CD8-positive, alpha-beta T cell (primary cell): ENCODE measurements at regions of chr10 and their contacts with region 1.

Region 1: DNA sequence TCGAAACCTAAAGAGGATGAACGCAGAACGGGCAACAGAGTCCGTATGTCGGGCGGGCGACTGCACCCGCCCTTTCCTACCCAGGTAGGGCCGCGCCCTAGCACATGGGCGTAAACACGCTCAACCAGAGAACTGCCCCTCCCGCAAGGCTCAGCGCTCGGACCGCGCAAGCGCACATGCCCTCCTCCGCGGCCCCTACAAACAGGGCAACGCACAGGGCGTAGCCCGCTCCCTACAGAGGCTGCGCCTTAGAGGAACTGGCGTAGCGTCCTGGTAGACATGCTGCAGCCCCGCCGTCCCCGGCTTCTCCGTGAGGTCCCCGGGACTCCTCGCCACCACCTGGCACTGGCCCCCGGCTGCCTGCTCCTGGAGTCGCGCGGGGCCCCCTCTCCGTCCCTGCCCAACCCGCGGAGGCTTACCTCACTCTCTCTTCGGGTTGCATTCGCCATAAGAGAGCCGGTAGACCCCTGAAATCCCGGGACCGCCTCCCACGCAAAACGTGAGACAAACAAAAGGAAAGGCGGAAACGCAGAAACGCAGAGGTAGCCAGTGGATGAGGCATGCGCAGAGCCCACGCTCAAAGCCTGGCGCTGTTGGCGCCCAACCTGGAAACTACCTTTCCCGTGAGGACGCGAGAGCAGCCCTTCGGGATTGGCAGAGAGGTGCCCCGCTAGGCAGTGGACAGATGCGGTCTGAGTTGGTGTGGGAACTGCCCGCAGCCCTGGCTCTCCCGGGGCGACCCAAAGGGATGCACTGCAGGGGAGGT is at the start of gene ZNF33B:
- DNase-seq: peak; percentile 84 to 97 (median 93)
- ATAC-seq: peak; percentile 92
- H3K4me3 ChIP-seq: peak within 1 kb of the TSS; percentile 82 to 88
- H3K4me3 Mint-ChIP-seq: peak within 1 kb of the TSS; percentile 98
- H3K27ac ChIP-seq: peak within 1 kb of the TSS; percentile 91 to 93
- H3K27ac Mint-ChIP-seq: peak within 1 kb of the TSS; percentile 98
- H3K4me1 ChIP-seq: peaks cover 14% of the 10 kb centered on the region
- H3K4me1 Mint-ChIP-seq: peaks cover 44% of the 10 kb centered on the region
- H3K27me3 ChIP-seq: no peaks in the 10 kb centered on the region
- H3K27me3 Mint-ChIP-seq: no peaks in the 10 kb centered on the region
- CTCF ChIP-seq: no peak
- total RNA-seq, gene ZNF33B: 16.4 to 17.0 TPM

Region 2: GRCh38 chr10:42782446-42783180 is 144.4 kb after region 1 on chr10 and contains the start of gene BMS1:
- CTCF ChIA-PET with region 1: no interaction called
- POLR2A ChIA-PET with region 1: interaction called, 10 read pairs
- intact Hi-C with region 1: loop called (anchors 1 kb)
- DNase-seq: peak; percentile 82 to 92 (median 87)
- ATAC-seq: peak; percentile 85
- H3K4me3 ChIP-seq: peak within 1 kb of the TSS; percentile 83 to 88
- H3K4me3 Mint-ChIP-seq: peak within 1 kb of the TSS; percentile 99
- H3K27ac ChIP-seq: peak within 1 kb of the TSS; percentile 78 to 90
- H3K27ac Mint-ChIP-seq: peak within 1 kb of the TSS; percentile 96
- H3K4me1 ChIP-seq: peaks cover 23% of the 10 kb centered on the region
- H3K4me1 Mint-ChIP-seq: peaks cover 42% of the 10 kb centered on the region
- H3K27me3 ChIP-seq: no peaks in the 10 kb centered on the region
- H3K27me3 Mint-ChIP-seq: peaks cover 4% of the 10 kb centered on the region
- CTCF ChIP-seq: no peak
- total RNA-seq, gene BMS1: 18.1 to 19.9 TPM

Region 3: GRCh38 chr10:43105102-43105785 is 467.0 kb after region 1 on chr10:
- CTCF ChIA-PET with region 1: no interaction called
- POLR2A ChIA-PET with region 1: no interaction called
- intact Hi-C with region 1: loop called in 1 of 2 experiments (anchors 10 kb)
- DNase-seq: peak; percentile 54 to 87 (median 71)
- ATAC-seq: peak; percentile 96
- H3K4me3 ChIP-seq: peak overlapping the region; percentile 56 to 72
- H3K4me3 Mint-ChIP-seq: peak overlapping the region; percentile 80
- H3K27ac ChIP-seq: no peak overlapping the region
- H3K27ac Mint-ChIP-seq: no peak overlapping the region
- H3K4me1 ChIP-seq: peaks cover 13% of the 10 kb centered on the region
- H3K4me1 Mint-ChIP-seq: peaks cover 8% of the 10 kb centered on the region
- H3K27me3 ChIP-seq: peaks cover 0 to 10% of the 10 kb centered on the region in 2 experiments
- H3K27me3 Mint-ChIP-seq: peaks cover 17% of the 10 kb centered on the region
- CTCF ChIP-seq: peak; percentile 98

Region 4: DNA sequence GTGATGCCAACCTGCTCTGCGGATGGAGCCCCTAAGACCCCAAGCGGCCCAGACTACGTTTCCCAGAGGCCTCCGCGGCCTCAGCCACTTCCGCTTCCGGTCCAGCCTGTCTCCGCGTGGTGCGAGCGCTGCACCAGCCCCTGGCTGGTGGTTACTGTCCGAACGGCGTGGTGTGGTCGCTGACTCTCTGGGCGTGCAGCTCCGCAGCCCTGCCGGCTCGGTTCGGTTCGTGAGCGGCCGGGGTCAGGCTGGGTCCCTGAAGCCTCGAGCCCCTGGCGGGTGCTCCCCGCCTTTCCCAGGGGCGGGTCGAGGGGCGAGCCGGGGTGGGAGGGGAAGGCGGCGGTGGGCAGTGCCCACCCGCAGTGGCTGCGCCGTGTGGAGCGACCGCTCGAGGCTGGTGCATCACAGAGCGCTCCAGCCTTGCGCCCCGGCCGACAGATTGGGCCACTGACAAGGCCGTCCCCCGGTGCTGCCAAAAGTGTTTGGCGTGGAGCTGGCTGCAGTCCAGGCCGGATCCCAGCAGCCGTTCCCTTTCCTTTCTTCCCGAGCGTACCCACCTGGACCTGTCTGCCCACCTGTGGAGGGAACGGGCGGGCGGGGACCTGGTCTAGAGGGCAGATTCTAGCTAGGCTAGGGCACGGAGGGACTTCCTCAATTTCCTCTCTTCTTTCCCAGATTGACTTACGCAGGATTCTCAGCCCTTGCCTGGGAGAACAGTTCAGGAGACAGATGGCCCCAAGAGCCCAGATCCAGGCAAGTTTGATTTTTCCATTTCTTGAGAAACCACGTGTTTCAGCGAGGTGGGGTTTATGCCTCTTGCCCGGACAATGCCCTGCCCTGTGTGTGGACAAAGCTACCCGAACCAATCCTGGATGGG is 968.3 kb after region 1 on chr10 and contains the start of gene ZNF485:
- CTCF ChIA-PET with region 1: no interaction called
- POLR2A ChIA-PET with region 1: no interaction called
- intact Hi-C with region 1: loop called in 1 of 2 experiments (anchors 1 kb)
- DNase-seq: peak; percentile 21 to 82 (median 67)
- ATAC-seq: peak; percentile 92
- H3K4me3 ChIP-seq: peak within 1 kb of the TSS; percentile 62 to 71
- H3K4me3 Mint-ChIP-seq: peak within 1 kb of the TSS; percentile 84
- H3K27ac ChIP-seq: peak within 1 kb of the TSS; percentile 10 to 18
- H3K27ac Mint-ChIP-seq: peak within 1 kb of the TSS; percentile 81
- H3K4me1 ChIP-seq: peaks cover 15% of the 10 kb centered on the region
- H3K4me1 Mint-ChIP-seq: peaks cover 33% of the 10 kb centered on the region
- H3K27me3 ChIP-seq: no peaks in the 10 kb centered on the region
- H3K27me3 Mint-ChIP-seq: no peaks in the 10 kb centered on the region
- CTCF ChIP-seq: no peak
- total RNA-seq, gene ZNF485: 0.92 to 1.2 TPM